ENCODE measurements at regions of chr5 and their contacts with region 1.

Region 1: GRCh38 chr5:96601811-96602244 is 60.3 kb upstream of the CAST start:
- DNase-seq: peak; percentile 72
- ATAC-seq: peak; percentile 70
- H3K4me3 ChIP-seq: no peak overlapping the region
- H3K4me3 Mint-ChIP-seq: no peak overlapping the region
- H3K27ac ChIP-seq: no peak overlapping the region
- H3K27ac Mint-ChIP-seq: no peak overlapping the region
- H3K4me1 ChIP-seq: no peaks in the 10 kb centered on the region
- H3K4me1 Mint-ChIP-seq: no peaks in the 10 kb centered on the region
- H3K27me3 ChIP-seq: peaks cover 0 to 7% (median 0%) of the 10 kb centered on the region in 4 experiments
- H3K27me3 Mint-ChIP-seq: peaks cover 22% of the 10 kb centered on the region
- CTCF ChIP-seq: peak; percentile 90

Region 2: DNA sequence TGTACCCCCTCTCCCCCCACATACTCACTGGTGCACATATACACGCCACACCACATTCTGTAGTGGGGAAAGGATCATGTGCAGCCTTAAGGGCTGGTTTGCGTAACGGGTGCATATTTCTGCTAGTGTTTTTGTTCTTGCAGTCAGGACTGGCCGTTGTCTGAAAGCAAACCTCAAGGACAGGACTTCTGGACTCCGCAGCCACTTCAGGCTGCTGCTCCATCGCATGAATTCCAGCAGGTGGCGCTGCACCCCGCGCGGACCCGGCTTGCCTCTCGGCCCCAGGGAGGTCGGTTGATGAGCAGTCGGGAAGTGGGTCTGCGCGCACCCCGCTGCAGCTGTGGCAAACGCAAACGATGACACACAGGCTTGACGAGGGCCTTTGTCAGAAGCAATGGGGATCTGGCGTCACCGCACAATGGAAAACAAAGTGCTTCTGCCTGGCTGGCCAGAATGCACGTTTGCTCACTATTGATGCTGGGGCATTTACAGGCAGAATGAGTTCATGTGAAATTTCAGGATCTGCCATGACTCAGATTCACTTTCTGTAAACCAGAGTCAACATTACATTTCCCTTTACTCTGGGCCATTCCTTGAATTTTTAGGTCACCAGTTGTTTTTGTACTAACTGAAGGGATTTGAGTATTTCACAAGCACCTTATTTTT is 743.0 kb before region 1 on chr5:
- CTCF ChIA-PET with region 1: interaction called, 70 read pairs
- POLR2A ChIA-PET with region 1: no interaction called
- intact Hi-C with region 1: no loop called
- DNase-seq: peak; percentile 89
- ATAC-seq: peak; percentile 94
- H3K4me3 ChIP-seq: peak overlapping the region in 3 of 5 experiments; percentile 7 to 25 (median 18)
- H3K4me3 Mint-ChIP-seq: peak overlapping the region; percentile 76
- H3K27ac ChIP-seq: no peak overlapping the region
- H3K27ac Mint-ChIP-seq: no peak overlapping the region
- H3K4me1 ChIP-seq: peaks cover 15 to 18% of the 10 kb centered on the region in 2 donors
- H3K4me1 Mint-ChIP-seq: peaks cover 30% of the 10 kb centered on the region
- H3K27me3 ChIP-seq: peaks cover 0 to 6% (median 1%) of the 10 kb centered on the region in 4 experiments
- H3K27me3 Mint-ChIP-seq: peaks cover 11% of the 10 kb centered on the region
- CTCF ChIP-seq: peak; percentile 97

Region 3: DNA sequence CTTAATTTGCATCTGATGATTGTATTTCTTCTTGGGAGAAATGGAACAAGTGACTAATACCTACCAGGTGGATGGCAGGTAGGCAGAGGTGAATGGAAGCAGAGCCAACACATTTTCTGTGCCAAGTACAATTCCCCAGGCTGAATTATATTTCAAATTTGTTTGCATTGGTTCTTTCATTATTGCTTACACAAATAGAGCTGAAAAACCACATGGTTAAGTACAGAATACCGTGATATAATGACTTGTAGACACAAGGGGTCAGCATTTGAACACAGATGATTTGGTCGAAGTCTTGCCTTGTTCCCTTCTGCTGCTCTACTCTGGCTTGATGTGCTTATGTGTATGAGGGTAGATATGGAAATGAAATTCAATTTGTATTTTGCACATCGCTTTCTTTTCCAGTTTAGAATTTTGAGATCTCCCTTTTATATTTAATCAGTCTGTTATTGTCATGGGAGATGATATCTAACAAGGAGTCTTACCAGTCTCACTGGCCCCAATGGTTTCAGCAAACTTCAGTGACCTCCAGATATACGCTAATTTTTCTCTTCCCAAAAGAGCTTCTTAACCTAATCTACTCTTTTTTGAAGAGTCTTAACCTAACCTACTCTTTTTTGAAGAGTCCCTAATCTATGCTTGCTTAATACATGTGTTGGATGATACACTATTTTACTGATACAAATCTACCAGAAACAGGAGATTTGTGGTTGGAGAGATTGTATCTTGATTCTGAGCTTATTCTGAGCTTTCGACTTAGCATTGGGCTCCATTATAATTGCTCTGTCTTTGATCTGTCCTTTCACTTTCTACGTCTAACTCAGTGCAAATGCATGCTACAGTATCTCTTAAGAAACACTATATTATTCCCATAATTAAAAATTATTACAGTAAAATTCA is 256.9 kb before region 1 on chr5:
- CTCF ChIA-PET with region 1: interaction called, 27 read pairs
- POLR2A ChIA-PET with region 1: no interaction called
- intact Hi-C with region 1: no loop called
- DNase-seq: peak; percentile 47
- ATAC-seq: no peak
- H3K4me3 ChIP-seq: no peak overlapping the region
- H3K4me3 Mint-ChIP-seq: no peak overlapping the region
- H3K27ac ChIP-seq: no peak overlapping the region
- H3K27ac Mint-ChIP-seq: no peak overlapping the region
- H3K4me1 ChIP-seq: no peaks in the 10 kb centered on the region
- H3K4me1 Mint-ChIP-seq: no peaks in the 10 kb centered on the region
- H3K27me3 ChIP-seq: peaks cover 0 to 15% (median 5%) of the 10 kb centered on the region in 4 experiments
- H3K27me3 Mint-ChIP-seq: peaks cover 25% of the 10 kb centered on the region
- CTCF ChIP-seq: peak; percentile 33

Region 4: GRCh38 chr5:96463106-96463505 is 138.7 kb before region 1 on chr5:
- CTCF ChIA-PET with region 1: no interaction called
- POLR2A ChIA-PET with region 1: no interaction called
- intact Hi-C with region 1: no loop called
- DNase-seq: no peak
- ATAC-seq: no peak
- H3K4me3 ChIP-seq: no peak overlapping the region
- H3K4me3 Mint-ChIP-seq: no peak overlapping the region
- H3K27ac ChIP-seq: no peak overlapping the region
- H3K27ac Mint-ChIP-seq: no peak overlapping the region
- H3K4me1 ChIP-seq: no peaks in the 10 kb centered on the region
- H3K4me1 Mint-ChIP-seq: no peaks in the 10 kb centered on the region
- H3K27me3 ChIP-seq: no peaks in the 10 kb centered on the region
- H3K27me3 Mint-ChIP-seq: peaks cover 29% of the 10 kb centered on the region
- CTCF ChIP-seq: no peak

Region 5: DNA sequence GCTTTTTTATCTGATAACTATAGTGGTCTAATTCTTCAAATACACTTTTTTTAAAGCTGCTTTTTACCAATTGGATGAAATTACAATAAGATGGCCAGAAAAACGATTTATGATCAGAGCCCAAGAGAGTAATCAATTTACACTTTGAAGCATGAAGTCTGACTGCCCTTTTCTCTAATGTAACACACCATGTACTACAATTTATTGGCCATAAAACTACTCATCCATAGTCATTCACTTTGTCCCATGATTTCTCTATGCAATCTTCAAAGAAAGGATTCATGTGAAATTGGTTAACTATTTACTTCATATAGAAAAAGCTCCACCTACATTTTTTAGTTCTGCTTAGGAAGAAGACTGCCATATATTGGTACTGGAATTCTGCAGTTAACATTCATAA is 13.3 kb before region 1 on chr5:
- CTCF ChIA-PET with region 1: interaction called, 22 read pairs
- POLR2A ChIA-PET with region 1: no interaction called
- intact Hi-C with region 1: no loop called
- DNase-seq: no peak
- ATAC-seq: no peak
- H3K4me3 ChIP-seq: no peak overlapping the region
- H3K4me3 Mint-ChIP-seq: no peak overlapping the region
- H3K27ac ChIP-seq: no peak overlapping the region
- H3K27ac Mint-ChIP-seq: no peak overlapping the region
- H3K4me1 ChIP-seq: peaks cover 0 to 5% of the 10 kb centered on the region in 2 donors
- H3K4me1 Mint-ChIP-seq: peaks cover 7% of the 10 kb centered on the region
- H3K27me3 ChIP-seq: peaks cover 0 to 6% (median 5%) of the 10 kb centered on the region in 4 experiments
- H3K27me3 Mint-ChIP-seq: peaks cover 47% of the 10 kb centered on the region
- CTCF ChIP-seq: no peak

Region 6: DNA sequence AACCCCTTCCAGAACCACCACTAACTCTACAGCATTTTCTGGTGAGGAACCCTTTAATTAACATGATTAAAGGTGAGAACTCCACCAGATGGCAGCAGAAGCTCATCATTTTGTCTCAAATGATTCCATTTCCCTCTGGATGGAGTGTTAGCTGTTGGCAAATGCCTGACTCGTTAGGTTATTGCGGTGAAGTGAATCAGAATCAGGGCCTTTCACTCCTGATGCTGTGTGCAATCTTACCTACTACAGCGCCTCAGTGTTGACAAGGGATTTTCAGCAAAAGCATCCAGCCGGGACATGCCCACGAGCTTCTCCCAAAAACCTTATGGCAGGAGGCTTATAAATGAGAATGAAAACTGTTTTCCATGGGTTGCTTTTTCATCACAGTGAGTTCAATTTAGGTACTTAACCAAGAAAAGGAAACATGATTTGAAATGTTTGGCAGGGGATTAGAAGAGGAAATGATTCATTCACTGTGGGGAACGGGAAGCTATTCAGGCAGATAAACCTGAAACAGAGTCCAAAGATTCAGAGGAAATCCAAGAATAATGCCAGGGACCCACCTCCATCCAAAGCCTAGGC is 12.4 kb after region 1 on chr5:
- CTCF ChIA-PET with region 1: interaction called, 17 read pairs
- POLR2A ChIA-PET with region 1: interaction called, 3 read pairs
- intact Hi-C with region 1: no loop called
- DNase-seq: peak; percentile 56
- ATAC-seq: no peak
- H3K4me3 ChIP-seq: no peak overlapping the region
- H3K4me3 Mint-ChIP-seq: no peak overlapping the region
- H3K27ac ChIP-seq: no peak overlapping the region
- H3K27ac Mint-ChIP-seq: no peak overlapping the region
- H3K4me1 ChIP-seq: peaks cover 0 to 3% of the 10 kb centered on the region in 2 donors
- H3K4me1 Mint-ChIP-seq: no peaks in the 10 kb centered on the region
- H3K27me3 ChIP-seq: peaks cover 0 to 6% (median 0%) of the 10 kb centered on the region in 4 experiments
- H3K27me3 Mint-ChIP-seq: peaks cover 18% of the 10 kb centered on the region
- CTCF ChIP-seq: peak; percentile 75

Region 7: GRCh38 chr5:96657087-96657665 is 55.3 kb after region 1 on chr5:
- CTCF ChIA-PET with region 1: no interaction called
- POLR2A ChIA-PET with region 1: no interaction called
- intact Hi-C with region 1: no loop called
- DNase-seq: no peak
- ATAC-seq: no peak
- H3K4me3 ChIP-seq: no peak overlapping the region
- H3K4me3 Mint-ChIP-seq: no peak overlapping the region
- H3K27ac ChIP-seq: no peak overlapping the region
- H3K27ac Mint-ChIP-seq: no peak overlapping the region
- H3K4me1 ChIP-seq: peaks cover 7 to 10% of the 10 kb centered on the region in 2 donors
- H3K4me1 Mint-ChIP-seq: peaks cover 25% of the 10 kb centered on the region
- H3K27me3 ChIP-seq: peaks cover 0 to 16% (median 6%) of the 10 kb centered on the region in 4 experiments
- H3K27me3 Mint-ChIP-seq: peaks cover 14% of the 10 kb centered on the region
- CTCF ChIP-seq: no peak